Tibial artery (tissue), 4 donors: ENCODE measurements at regions of chr6 and their contacts with region 1.

Region 1: GRCh38 chr6:24699521-24700359 is 19.2 kb downstream of the C6orf62 start:
- DNase-seq: no peak
- H3K4me3 ChIP-seq: no peak overlapping the region
- H3K27ac ChIP-seq: peak overlapping the region in 1 of 2 donors; percentile 17
- H3K4me1 ChIP-seq: peaks cover 0 to 10% (median 2%) of the 10 kb centered on the region in 4 donors
- H3K27me3 ChIP-seq: no peaks in the 10 kb centered on the region
- CTCF ChIP-seq: no peak

Region 2: DNA sequence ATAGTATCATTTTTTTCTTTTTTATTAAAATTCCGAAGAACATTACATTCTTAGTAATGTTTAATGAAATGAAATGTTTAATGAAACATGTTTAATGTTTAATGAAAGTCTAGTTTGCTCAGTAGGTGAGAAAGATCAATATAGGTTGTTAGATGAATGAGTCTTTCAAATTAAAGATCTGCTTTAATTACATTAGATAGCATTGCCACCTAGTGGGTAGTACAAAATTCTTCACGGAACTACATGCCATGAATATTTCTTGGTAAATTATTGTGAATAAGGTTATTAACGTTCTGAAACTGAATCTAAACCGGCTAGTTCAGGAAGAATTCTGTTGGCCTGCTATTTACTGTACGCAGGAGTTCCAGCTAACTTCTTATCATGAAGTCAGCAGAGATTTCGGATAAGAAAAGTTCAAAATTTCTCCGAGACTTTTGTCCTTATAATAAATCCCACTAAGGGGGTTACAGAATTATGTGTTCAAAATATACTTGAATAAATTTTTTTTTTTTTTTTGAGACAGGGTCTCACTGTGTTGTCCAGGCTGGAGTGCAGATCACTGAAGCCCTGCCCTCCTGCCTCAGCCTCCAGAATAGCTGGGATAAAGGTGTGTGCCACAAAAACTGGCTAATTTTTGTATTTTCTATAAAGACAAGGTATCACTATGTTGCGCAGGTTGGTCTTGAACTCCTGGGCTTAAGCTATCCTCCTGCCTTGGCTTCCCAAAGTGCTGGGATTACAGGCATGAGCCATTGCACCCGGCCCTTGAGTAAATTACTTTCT is 67.1 kb after region 1 on chr6:
- intact Hi-C with region 1: loop called (anchors 2 kb)
- DNase-seq: no peak
- H3K4me3 ChIP-seq: no peak overlapping the region
- H3K27ac ChIP-seq: no peak overlapping the region
- H3K4me1 ChIP-seq: peaks cover 0 to 2% (median 0%) of the 10 kb centered on the region in 4 donors
- H3K27me3 ChIP-seq: no peaks in the 10 kb centered on the region
- CTCF ChIP-seq: peak; percentile 21 to 40